Activated B cell treated with CpG ODN at 0.5 μM for 24 hours (primary cell): ENCODE measurements at regions of chr4 and their contacts with region 1.

Region 1: DNA sequence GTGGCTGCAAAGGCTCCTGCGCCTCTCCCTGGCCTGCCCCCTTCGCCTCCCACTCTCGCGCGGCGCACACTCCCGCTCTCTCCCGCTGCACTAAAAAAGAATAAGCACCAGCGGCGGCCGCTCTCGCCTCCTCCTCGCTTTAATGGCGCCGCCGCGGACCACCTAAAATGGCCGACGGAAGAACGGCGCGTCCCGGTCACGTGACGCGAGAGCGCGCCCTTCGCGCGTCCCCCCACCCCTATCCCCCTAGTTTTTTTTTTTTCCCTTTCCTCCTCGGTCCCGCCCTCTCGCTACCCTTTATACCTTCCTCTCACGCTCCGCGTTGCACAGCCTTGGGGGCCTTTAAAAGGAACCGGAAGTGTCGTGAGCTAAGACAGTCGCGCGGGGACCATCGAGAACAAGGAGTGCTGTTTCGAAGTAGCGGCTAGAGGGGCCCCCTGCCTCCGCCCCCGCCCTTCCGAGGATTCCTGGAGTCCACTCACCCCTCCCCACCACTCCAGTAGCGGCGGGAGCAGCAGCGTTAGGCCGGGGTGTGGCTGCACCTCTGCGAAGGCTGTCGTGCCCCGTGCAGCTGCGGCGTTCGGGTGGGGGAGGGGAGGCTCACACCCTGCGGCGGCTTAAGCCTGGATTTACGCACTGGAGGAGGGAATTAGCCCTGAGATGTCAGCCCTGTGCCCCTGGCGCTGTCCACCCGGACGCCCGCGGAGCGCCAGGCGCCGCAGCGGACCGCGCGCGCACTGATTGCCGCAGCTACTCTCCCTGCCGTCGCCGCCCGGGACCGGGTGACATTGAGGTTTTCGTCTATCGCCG is at the start of gene HNRNPD:
- DNase-seq: peak; percentile 83
- ATAC-seq: peak; percentile 88
- H3K4me3 Mint-ChIP-seq: peak within 1 kb of the TSS; percentile 98
- H3K27ac Mint-ChIP-seq: peak within 1 kb of the TSS; percentile 100
- H3K4me1 Mint-ChIP-seq: peaks cover 55% of the 10 kb centered on the region
- H3K27me3 Mint-ChIP-seq: no peaks in the 10 kb centered on the region
- CTCF ChIP-seq: no peak
- total RNA-seq, gene HNRNPD: 300 and 350 TPM in 2 replicates

Region 2: GRCh38 chr4:82394910-82395309 is 20.9 kb after region 1 on chr4:
- CTCF ChIA-PET with region 1: no interaction called
- POLR2A ChIA-PET with region 1: interaction called, 3 read pairs
- intact Hi-C with region 1: loop called (anchors 2 kb)
- DNase-seq: no peak
- ATAC-seq: no peak
- H3K4me3 Mint-ChIP-seq: no peak overlapping the region
- H3K27ac Mint-ChIP-seq: no peak overlapping the region
- H3K4me1 Mint-ChIP-seq: peaks cover 5% of the 10 kb centered on the region
- H3K27me3 Mint-ChIP-seq: no peaks in the 10 kb centered on the region
- CTCF ChIP-seq: no peak

Region 3: DNA sequence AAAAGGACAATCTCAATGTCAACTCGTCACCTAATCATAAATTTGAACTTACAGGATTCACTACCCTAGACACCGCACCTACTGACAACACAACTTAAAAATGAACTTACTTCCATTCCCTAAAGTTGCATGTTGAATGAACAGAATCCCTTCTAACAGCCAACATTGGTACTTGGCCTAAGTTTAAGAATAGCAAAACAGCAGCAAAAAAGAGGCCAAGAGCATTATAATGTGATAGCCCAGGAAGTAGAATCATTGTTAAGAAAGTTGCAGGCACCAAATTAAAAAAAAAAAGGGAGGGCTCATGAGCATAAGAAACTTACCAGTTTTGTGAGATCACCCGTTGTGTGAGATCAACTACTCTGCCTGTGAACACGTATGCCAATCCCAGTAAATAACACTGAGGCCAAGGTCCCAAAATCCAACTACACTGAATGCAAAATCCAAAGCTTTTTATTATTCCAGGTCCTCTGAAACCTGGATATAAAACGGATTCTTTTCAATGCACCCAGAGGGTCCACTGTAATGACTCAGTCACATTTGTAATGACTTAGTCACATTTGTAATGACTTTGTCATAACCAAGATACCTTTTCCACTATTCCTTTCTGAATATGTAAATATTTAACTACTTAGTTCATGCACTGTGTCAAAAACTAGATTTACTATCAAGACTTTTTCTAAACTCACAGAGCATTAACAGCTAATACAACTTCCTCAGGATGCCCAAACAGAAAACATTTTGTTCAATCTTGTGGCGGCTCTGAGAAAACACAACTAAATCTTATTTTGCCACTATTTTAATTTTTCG is 49.4 kb after region 1 on chr4:
- CTCF ChIA-PET with region 1: interaction called, 7 read pairs
- POLR2A ChIA-PET with region 1: interaction called, 199 read pairs
- intact Hi-C with region 1: no loop called
- DNase-seq: no peak
- ATAC-seq: peak; percentile 20
- H3K4me3 Mint-ChIP-seq: no peak overlapping the region
- H3K27ac Mint-ChIP-seq: no peak overlapping the region
- H3K4me1 Mint-ChIP-seq: peaks cover 38% of the 10 kb centered on the region
- H3K27me3 Mint-ChIP-seq: no peaks in the 10 kb centered on the region
- CTCF ChIP-seq: no peak

Region 4: DNA sequence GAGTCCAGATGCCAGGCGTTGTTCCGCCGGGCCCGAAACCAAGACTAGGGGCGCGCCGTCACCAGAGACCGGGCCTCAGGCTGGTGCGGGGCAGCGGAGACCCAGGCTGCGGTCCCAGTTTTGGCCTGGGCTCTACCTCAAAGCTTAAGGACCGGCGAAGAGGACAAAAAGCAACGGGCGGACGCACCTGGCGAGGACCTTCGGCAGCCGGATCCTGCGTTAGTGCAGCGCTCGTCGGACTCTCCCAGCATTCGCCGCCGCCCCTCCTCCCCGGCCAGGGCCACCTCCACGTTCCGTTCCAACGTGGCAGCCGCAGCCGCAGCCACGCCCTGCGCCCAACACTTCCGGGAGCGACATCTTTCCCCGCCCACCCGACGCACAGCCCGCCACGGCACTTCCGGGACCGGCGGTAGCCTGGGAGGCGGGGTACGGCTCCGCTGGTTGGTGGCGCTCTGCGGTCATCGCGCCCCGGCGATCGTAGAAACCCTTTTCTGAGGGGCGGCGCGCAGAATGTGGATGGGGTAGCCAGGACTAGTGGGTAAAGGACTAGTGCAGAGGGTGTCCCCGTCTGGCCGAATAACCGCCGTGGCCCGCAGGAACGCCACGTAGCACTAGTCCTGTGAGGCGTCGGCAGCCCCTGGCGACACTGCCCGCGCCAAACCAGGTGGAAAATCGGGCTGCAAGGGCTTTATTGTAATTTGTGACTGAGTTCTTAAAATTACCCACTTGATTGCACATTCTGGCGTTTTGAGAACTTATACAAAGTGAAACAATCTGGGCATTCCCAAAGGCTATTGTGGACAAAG is 517.1 kb after region 1 on chr4 and contains the start of gene SEC31A:
- CTCF ChIA-PET with region 1: no interaction called
- POLR2A ChIA-PET with region 1: no interaction called
- intact Hi-C with region 1: loop called (anchors 1 kb)
- DNase-seq: peak; percentile 97
- ATAC-seq: peak; percentile 92
- H3K4me3 Mint-ChIP-seq: peak within 1 kb of the TSS; percentile 93
- H3K27ac Mint-ChIP-seq: peak within 1 kb of the TSS; percentile 94
- H3K4me1 Mint-ChIP-seq: peaks cover 34% of the 10 kb centered on the region
- H3K27me3 Mint-ChIP-seq: no peaks in the 10 kb centered on the region
- CTCF ChIP-seq: no peak
- total RNA-seq, gene SEC31A: 154 and 172 TPM in 2 replicates